ENCODE measurements at regions of chr21 and their contacts with region 1.

Region 1: GRCh38 chr21:39094847-39095579 is 88.2 kb downstream of the PSMG1 start:
- DNase-seq: no peak
- H3K4me3 ChIP-seq: no peak overlapping the region
- H3K27ac ChIP-seq: no peak overlapping the region
- H3K4me1 ChIP-seq: no peaks in the 10 kb centered on the region
- H3K27me3 ChIP-seq: no peaks in the 10 kb centered on the region
- CTCF ChIP-seq: no peak
- EP300 ChIP-seq: no peak
- POLR2A ChIP-seq: no peak

Region 2: DNA sequence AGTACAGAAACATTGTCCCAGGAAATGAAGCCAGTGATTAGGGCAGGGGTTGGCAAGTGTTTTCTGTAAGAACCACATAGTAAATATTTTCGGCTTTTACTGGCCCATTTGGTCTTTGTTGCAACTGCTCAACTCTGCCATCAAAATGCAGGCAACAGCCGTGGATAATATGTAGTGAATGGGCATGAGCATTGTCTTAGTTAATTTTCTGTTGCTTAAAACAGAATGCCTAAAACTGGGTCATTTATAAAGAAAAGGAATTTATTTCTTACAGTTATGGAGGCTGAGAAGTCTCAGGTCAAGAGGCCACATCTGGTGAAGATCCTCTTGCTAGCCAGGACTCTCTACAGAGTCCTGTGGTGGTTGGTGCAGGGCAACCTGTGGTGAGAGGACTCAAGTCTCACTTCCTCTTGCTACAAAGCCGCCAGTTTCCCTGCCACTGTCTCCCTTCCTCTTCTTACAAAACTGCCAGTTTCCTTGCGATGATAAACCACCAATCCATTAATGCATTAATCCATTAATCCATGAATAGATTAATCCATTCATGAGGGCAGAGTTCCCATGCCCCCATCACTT is 78.2 kb before region 1 on chr21:
- intact Hi-C with region 1: loop called in 1 of 4 experiments (anchors 10 kb)
- DNase-seq: no peak
- H3K4me3 ChIP-seq: no peak overlapping the region
- H3K27ac ChIP-seq: no peak overlapping the region
- H3K4me1 ChIP-seq: peaks cover 10% of the 10 kb centered on the region
- H3K27me3 ChIP-seq: no peaks in the 10 kb centered on the region
- CTCF ChIP-seq: no peak
- EP300 ChIP-seq: no peak
- POLR2A ChIP-seq: no peak

Region 3: DNA sequence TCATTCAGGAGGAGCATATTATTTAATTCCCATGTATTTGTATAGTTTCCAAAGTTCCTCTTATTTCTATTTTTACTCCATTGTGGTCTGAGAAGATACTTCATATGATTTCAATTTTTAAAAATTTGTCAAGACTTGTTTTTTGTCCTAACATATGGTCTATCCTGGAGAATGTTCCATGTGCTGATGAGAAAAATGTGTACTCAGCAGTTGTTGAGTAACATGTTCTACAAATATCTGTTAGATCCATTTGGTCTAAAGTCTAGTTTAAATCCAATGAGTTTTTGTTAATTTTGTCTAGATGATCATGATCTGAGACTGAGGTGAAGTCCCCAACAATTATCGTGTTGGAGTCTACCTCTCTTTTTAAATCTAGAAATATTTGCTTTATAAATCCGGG is 73.8 kb after region 1 on chr21:
- intact Hi-C with region 1: no loop called
- DNase-seq: no peak
- H3K4me3 ChIP-seq: no peak overlapping the region
- H3K27ac ChIP-seq: no peak overlapping the region
- H3K4me1 ChIP-seq: no peaks in the 10 kb centered on the region
- H3K27me3 ChIP-seq: no peaks in the 10 kb centered on the region
- CTCF ChIP-seq: no peak
- EP300 ChIP-seq: no peak
- POLR2A ChIP-seq: no peak

Region 4: DNA sequence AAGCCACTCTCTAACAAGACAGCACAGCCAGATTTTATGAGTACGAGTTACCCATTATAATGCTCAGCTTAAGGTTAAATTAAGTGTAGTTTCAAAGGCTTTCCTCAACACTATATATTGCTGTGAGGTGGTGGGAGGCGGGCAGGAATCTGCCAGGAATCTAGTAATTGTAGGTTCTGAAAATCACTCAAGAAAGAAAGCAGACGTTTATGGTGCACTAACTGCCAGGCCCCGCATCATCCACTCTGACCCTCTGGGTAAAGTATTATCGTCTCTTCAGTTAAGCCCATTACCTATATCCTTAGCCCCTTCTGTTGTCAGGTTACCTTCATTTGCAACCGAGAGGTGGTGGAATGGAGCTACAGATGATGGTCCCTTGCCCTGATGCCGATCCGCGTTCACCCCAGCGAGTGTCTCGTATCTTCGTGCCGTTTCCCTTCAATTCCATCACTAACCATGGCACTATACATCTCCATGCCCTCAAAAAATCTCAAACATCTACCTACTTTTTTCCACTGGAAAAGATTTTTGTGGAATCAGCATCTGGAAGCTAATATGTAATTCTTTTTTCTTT is 241.5 kb after region 1 on chr21:
- intact Hi-C with region 1: no loop called
- DNase-seq: no peak
- H3K4me3 ChIP-seq: no peak overlapping the region
- H3K27ac ChIP-seq: no peak overlapping the region
- H3K4me1 ChIP-seq: peaks cover 3% of the 10 kb centered on the region
- H3K27me3 ChIP-seq: no peaks in the 10 kb centered on the region
- CTCF ChIP-seq: no peak
- EP300 ChIP-seq: no peak
- POLR2A ChIP-seq: no peak

Measured in ovary (tissue), 10 donors.